Heart left ventricle (tissue), 16 donors: ENCODE measurements at regions of chr13 and their contacts with region 1.

Region 1: GRCh38 chr13:68254151-68254550 is 1024.0 kb upstream of the PCDH9 start:
- DNase-seq: no peak
- ATAC-seq: no peak
- H3K4me3 ChIP-seq: no peak overlapping the region
- H3K27ac ChIP-seq: no peak overlapping the region
- H3K4me1 ChIP-seq: no peaks in the 10 kb centered on the region
- H3K27me3 ChIP-seq: no peaks in the 10 kb centered on the region
- CTCF ChIP-seq: no peak
- POLR2A ChIP-seq: no peak

Region 2: DNA sequence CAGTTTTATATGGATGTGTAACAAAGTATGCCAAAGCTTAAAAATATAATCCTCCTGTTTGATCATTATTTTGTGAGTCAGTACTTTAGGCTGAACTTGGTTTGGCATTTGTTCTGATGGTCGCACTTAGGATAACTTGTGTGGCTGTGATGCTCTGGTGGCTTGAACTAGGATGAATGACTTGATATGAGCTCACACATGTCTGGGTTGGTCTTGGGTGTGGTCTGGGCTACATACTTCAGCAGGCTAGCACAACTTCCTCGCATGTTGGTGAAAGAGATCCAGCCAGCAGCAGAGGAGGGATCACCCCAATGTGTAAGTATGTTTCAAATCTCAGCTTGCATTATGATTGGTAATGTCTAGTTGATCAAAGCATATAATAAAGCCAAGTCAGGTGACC is 54.9 kb before region 1 on chr13:
- intact Hi-C with region 1: no loop called
- DNase-seq: no peak
- ATAC-seq: no peak
- H3K4me3 ChIP-seq: no peak overlapping the region
- H3K27ac ChIP-seq: no peak overlapping the region
- H3K4me1 ChIP-seq: no peaks in the 10 kb centered on the region
- H3K27me3 ChIP-seq: no peaks in the 10 kb centered on the region
- CTCF ChIP-seq: no peak
- POLR2A ChIP-seq: no peak

Region 3: DNA sequence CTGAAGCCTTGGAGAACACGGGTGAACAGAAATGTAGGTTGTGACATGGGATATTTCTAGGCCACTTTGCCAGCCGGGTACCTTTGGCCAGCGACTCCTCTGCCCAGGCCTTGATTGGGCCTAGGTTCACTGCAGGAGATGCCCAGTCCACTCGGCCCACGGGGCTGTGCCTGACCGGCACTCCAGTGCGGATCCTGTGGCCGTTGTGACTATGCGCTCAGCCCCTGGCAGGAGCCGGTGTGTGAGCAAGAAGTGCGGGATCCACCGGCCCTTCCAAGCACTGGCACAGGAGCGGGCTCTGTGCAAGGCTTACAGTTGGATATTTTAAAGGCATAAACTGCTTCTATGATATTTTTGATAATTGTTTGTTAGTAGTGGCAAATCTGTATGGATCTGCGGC is 18.5 kb after region 1 on chr13:
- intact Hi-C with region 1: loop called in 1 of 10 experiments (anchors 2 kb)
- DNase-seq: peak in 1 of 5 donors; percentile 42
- ATAC-seq: no peak
- H3K4me3 ChIP-seq: no peak overlapping the region
- H3K27ac ChIP-seq: no peak overlapping the region
- H3K4me1 ChIP-seq: no peaks in the 10 kb centered on the region
- H3K27me3 ChIP-seq: no peaks in the 10 kb centered on the region
- CTCF ChIP-seq: no peak
- POLR2A ChIP-seq: no peak